ENCODE measurements at regions of chr5 and their contacts with region 1.

Region 1: GRCh38 chr5:57173185-57174127 is at the start of gene GPBP1:
- DNase-seq: peak; percentile 98
- H3K4me3 ChIP-seq: peak within 1 kb of the TSS; percentile 99
- CTCF ChIP-seq: no peak

Region 2: GRCh38 chr5:56950626-56951125 is 222.8 kb before region 1 on chr5:
- CTCF ChIA-PET with region 1: no interaction called
- POLR2A ChIA-PET with region 1: interaction called, 10 read pairs
- DNase-seq: no peak
- H3K4me3 ChIP-seq: peak overlapping the region; percentile 72
- CTCF ChIP-seq: no peak

Region 3: DNA sequence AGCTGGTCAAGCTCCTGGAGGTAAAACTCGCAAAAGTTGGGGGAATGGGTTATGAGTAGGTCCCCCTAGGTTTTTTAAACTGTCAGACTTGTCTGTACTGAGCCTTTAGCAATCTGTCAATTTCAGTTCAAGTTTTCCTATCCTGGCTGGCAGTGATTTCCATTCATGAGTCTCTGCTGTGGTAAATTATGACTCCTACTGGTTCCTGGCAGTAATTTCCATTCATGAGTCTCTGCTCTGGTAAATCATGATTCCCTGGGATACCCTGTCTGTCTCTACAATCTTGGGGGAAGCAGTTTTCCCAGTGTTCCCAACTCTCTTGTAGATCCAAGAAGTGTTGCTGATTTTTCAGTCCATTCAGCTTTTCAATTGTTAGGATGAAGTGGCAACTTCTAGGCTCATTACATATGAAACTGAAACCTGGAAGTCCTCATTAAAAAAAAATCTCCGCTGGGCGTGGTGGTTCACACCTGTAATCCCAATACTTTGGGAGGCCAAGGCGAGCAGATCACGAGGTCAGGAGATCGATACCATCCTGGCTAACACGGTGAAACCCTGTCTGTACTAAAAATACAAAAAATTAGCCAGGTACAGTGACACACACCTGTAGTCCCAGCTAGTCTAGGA is 90.9 kb before region 1 on chr5:
- CTCF ChIA-PET with region 1: no interaction called
- POLR2A ChIA-PET with region 1: no interaction called
- DNase-seq: no peak
- H3K4me3 ChIP-seq: no peak overlapping the region
- CTCF ChIP-seq: no peak